ENCODE measurements at regions of chr22 and their contacts with region 1.

Region 1: GRCh38 chr22:24503137-24503842 is 8.2 kb downstream of the UPB1 start:
- DNase-seq: peak; percentile 81
- ATAC-seq: peak; percentile 90
- H3K4me3 Mint-ChIP-seq: no peak overlapping the region
- H3K27ac Mint-ChIP-seq: no peak overlapping the region
- H3K4me1 Mint-ChIP-seq: peaks cover 9% of the 10 kb centered on the region
- H3K27me3 Mint-ChIP-seq: no peaks in the 10 kb centered on the region

Region 2: GRCh38 chr22:24325105-24325757 is 178.1 kb before region 1 on chr22:
- CTCF ChIA-PET with region 1: interaction called, 3 read pairs
- POLR2A ChIA-PET with region 1: no interaction called
- intact Hi-C with region 1: loop called in 1 of 2 experiments (anchors 1 kb)
- DNase-seq: peak; percentile 23
- ATAC-seq: peak; percentile 85
- H3K4me3 Mint-ChIP-seq: no peak overlapping the region
- H3K27ac Mint-ChIP-seq: peak overlapping the region; percentile 44
- H3K4me1 Mint-ChIP-seq: peaks cover 35% of the 10 kb centered on the region
- H3K27me3 Mint-ChIP-seq: no peaks in the 10 kb centered on the region